HEK293T (cell line): ENCODE measurements at regions of chr11 and their contacts with region 1.

Region 1: GRCh38 chr11:125123947-125124617 is 12.7 kb upstream of the TMEM218 start:
- DNase-seq: peak; percentile 61

Region 2: DNA sequence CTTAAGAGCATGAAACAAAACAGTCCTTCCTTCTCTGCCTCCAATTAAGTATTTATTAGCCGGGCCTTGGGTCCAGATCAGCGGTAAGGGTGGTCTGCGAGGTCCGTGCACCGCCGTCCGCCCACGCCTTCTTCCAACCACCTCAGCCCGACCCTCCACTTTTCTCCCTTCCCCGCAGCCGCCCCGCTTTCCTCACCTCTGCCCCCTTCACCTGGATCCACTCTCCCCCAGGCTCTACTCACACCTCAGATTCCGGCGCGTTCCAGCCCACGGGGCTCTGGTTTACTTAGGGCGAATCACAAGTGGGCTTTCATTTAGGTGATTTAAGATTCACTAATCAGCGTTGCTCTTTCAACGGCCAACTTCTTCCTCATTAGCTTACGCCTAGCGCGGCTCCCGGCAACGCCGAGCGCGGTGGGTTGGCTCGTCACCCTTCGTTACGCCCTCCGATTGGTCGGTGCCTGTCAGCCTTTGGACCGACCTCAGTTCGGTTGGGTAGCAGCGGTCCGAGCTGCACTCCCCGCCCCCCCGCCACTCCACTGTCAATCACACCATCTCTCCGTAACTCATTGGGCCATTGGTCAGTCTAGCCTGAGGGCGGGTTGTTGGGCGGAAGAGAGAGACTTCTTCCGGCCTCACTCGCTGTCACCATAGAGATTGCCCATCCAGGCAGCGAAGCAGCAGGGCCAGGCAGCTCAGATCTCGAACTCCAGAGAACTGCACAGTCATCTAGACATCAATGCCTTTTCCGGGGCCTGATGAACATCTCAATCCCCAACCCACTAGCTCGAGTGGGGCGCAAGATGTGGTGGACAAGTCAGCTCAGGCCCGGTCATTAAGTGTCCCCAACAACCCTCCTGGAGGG is 12.5 kb before region 1 on chr11 and contains the start of gene TMEM218:
- CTCF ChIA-PET with region 1: interaction called, 5 read pairs
- POLR2A ChIA-PET with region 1: interaction called, 12 read pairs
- DNase-seq: peak; percentile 98